Naive thymus-derived CD8-positive, alpha-beta T cell (primary cell): ENCODE measurements at regions of chr6 and their contacts with region 1.

Region 1: DNA sequence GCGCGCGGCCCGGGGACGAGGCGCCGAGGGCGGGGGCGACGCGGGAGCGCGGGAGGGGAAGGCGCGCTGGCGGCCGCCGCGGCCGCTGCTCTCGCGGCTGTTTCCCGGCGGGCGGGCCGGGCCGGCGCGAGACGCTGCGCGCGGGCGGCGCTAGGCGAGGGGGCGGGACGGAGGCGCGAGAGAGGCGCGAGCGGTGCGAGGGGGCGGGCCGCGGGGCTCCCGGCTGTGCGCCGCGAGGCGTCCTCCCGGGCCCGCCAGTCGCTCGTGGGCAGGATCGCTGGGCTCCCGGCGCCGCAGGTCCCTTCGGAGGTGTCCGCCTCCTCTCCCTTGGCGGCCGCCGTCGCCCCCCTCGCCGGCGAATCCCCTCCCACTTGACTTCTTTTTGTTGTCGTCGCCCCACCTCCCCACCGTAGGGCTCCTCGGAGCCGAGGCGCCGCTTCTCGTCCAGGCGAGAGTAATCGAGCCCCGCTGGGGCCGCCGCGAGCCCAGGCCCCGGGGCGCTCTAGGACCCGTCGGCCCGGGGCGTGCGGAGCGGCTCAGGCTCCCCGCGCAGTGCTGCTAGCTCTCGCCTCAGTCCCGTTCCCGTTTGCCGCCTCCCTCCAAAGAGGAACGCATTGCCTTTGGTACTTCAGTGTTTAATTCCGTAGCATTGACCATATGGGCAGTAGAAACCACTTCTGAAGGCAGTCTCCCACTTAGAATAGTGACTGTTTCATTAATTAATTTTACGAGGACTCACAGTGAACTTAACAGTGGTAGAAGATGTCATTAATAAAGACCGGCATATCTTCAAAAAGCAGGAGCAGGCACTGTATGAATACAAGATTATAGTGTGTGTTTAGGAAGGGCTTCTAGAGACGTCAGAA is at the start of gene RANBP9:
- DNase-seq: peak; percentile 86 to 96 (median 90)
- ATAC-seq: peak; percentile 83
- H3K4me3 Mint-ChIP-seq: peak within 1 kb of the TSS; percentile 93 to 99 (median 97)
- H3K27ac Mint-ChIP-seq: peak within 1 kb of the TSS; percentile 95 to 99 (median 98)
- H3K4me1 Mint-ChIP-seq: peaks cover 19 to 53% (median 38%) of the 10 kb centered on the region in 4 donors
- H3K27me3 Mint-ChIP-seq: no peaks in the 10 kb centered on the region
- polyA plus RNA-seq, gene RANBP9: 1.9 to 5.6 (median 3.9) TPM

Region 2: GRCh38 chr6:13681305-13682061 is 30.5 kb before region 1 on chr6:
- POLR2A ChIA-PET with region 1: interaction called, 17 read pairs
- DNase-seq: peak in 4 of 10 donors; percentile 13 to 69 (median 56)
- ATAC-seq: peak; percentile 69 to 81
- H3K4me3 Mint-ChIP-seq: peak overlapping the region; percentile 36 to 83 (median 64)
- H3K27ac Mint-ChIP-seq: peak overlapping the region; percentile 83 to 95 (median 90)
- H3K4me1 Mint-ChIP-seq: peaks cover 23 to 75% (median 58%) of the 10 kb centered on the region in 4 donors
- H3K27me3 Mint-ChIP-seq: no peaks in the 10 kb centered on the region

Region 3: DNA sequence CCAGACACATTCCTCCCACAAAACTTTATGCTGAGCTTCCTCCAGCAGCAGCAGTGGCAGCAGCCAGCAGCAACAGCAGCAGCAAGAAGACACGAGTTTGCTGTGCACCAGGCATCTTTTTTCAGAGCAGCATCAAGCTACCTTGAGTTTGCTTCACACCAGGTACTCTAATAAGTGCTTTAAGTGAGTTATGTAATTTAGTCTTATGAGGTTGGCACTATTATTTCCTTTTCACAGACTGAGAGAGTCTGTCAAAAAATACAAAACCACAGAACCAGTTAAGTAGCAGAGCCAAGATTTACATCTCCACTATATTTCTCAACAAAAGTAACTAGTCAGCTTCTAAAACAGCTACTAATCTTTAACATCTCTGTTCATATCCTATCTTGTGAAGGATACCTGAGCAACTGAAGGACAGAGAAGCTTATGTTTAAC is 24.0 kb before region 1 on chr6:
- POLR2A ChIA-PET with region 1: interaction called, 29 read pairs
- DNase-seq: peak in 4 of 10 donors; percentile 15 to 65 (median 54)
- ATAC-seq: peak; percentile 82 to 90
- H3K4me3 Mint-ChIP-seq: peak overlapping the region; percentile 23 to 83 (median 78)
- H3K27ac Mint-ChIP-seq: peak overlapping the region; percentile 93 to 96 (median 95)
- H3K4me1 Mint-ChIP-seq: peaks cover 42 to 72% (median 67%) of the 10 kb centered on the region in 4 donors
- H3K27me3 Mint-ChIP-seq: no peaks in the 10 kb centered on the region

Region 4: DNA sequence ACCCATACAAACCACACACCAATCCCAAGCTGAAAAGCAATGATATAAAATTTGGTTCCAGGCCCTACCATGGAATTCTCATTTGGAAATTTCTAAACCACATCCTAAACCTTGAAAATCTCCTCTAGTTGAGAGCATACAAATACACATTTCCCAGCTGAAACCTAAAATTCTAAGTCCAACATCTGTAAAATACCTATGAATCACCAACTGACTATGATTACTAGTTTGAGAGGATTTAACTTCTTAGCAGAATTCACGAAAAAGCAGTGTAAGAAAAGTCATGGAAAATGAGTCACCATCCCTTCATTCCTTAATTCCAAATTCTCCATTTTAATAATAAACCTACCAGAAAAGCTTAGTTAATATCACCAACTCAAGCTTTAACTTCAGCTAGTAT is 15.7 kb before region 1 on chr6:
- POLR2A ChIA-PET with region 1: interaction called, 24 read pairs
- DNase-seq: no peak
- ATAC-seq: no peak
- H3K4me3 Mint-ChIP-seq: peak overlapping the region in 5 of 10 donors; percentile 0 to 51 (median 12)
- H3K27ac Mint-ChIP-seq: peak overlapping the region in 9 of 10 donors; percentile 28 to 91 (median 87)
- H3K4me1 Mint-ChIP-seq: peaks cover 33 to 83% (median 70%) of the 10 kb centered on the region in 4 donors
- H3K27me3 Mint-ChIP-seq: no peaks in the 10 kb centered on the region

Region 5: GRCh38 chr6:13733178-13733887 is 21.4 kb after region 1 on chr6:
- POLR2A ChIA-PET with region 1: no interaction called
- DNase-seq: no peak
- ATAC-seq: no peak
- H3K4me3 Mint-ChIP-seq: no peak overlapping the region
- H3K27ac Mint-ChIP-seq: peak overlapping the region in 1 of 10 donors; percentile 34
- H3K4me1 Mint-ChIP-seq: peaks cover 0 to 2% (median 0%) of the 10 kb centered on the region in 4 donors
- H3K27me3 Mint-ChIP-seq: peaks cover 0 to 6% (median 0%) of the 10 kb centered on the region in 5 donors

Region 6: DNA sequence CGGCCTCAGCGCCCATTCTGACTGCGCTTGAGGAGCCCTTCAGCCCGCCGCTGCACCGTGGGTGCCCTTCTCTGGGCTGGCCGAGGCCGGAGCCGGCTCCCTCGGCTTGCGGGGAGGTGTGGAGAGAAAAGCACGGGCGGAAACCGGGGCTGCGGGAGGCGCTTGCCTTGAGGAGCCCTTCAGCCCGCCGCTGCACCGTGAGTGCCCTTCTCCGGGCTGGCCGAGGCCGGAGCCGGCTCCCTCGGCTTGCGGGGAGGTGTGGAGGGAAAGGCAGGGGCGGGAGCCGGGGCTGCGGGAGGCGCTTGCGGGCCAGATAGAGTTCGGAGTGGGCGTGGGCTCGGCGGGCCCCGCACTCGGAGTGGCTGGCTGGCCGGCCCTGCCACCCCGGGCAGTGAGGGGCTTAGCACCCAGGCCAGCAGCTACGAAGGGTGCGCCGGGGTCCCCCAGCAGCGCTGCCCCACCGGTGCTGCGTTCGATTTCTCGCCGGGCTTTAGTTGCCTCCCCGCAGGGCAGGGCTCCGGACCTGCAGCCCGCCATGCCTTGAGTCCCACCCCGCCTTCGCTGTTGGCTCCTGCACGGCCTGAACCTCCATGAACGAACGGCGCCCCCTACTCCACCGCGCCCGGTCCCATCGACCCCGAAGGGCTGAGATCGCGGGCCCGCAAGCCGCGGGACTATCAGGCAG is 148.0 kb after region 1 on chr6:
- POLR2A ChIA-PET with region 1: no interaction called
- DNase-seq: no peak
- ATAC-seq: peak; percentile 11 to 23
- H3K4me3 Mint-ChIP-seq: peak overlapping the region in 8 of 10 donors; percentile 4 to 56 (median 46)
- H3K27ac Mint-ChIP-seq: no peak overlapping the region
- H3K4me1 Mint-ChIP-seq: peaks cover 0 to 4% (median under 1%) of the 10 kb centered on the region in 4 donors
- H3K27me3 Mint-ChIP-seq: peaks cover 33 to 54% (median 41%) of the 10 kb centered on the region in 5 donors